CD4-positive, alpha-beta T cell (primary cell): ENCODE measurements at regions of chr2 and their contacts with region 1.

Region 1: GRCh38 chr2:181891258-181891965 is at the start of gene ITPRID2:
- DNase-seq: peak; percentile 12 to 86 (median 52)
- ATAC-seq: peak; percentile 90
- H3K4me3 ChIP-seq: peak within 1 kb of the TSS; percentile 75
- H3K4me3 Mint-ChIP-seq: peak within 1 kb of the TSS; percentile 97
- H3K27ac ChIP-seq: peak within 1 kb of the TSS in 1 of 2 donors; percentile 36
- H3K27ac Mint-ChIP-seq: peak within 1 kb of the TSS; percentile 77
- H3K4me1 ChIP-seq: peaks cover 8% of the 10 kb centered on the region
- H3K4me1 Mint-ChIP-seq: peaks cover 37% of the 10 kb centered on the region
- H3K27me3 ChIP-seq: peaks cover 4 to 15% of the 10 kb centered on the region in 2 experiments
- H3K27me3 Mint-ChIP-seq: peaks cover 25% of the 10 kb centered on the region
- CTCF ChIP-seq: no peak
- total RNA-seq, gene ITPRID2: 75.8 to 79.7 TPM

Region 2: DNA sequence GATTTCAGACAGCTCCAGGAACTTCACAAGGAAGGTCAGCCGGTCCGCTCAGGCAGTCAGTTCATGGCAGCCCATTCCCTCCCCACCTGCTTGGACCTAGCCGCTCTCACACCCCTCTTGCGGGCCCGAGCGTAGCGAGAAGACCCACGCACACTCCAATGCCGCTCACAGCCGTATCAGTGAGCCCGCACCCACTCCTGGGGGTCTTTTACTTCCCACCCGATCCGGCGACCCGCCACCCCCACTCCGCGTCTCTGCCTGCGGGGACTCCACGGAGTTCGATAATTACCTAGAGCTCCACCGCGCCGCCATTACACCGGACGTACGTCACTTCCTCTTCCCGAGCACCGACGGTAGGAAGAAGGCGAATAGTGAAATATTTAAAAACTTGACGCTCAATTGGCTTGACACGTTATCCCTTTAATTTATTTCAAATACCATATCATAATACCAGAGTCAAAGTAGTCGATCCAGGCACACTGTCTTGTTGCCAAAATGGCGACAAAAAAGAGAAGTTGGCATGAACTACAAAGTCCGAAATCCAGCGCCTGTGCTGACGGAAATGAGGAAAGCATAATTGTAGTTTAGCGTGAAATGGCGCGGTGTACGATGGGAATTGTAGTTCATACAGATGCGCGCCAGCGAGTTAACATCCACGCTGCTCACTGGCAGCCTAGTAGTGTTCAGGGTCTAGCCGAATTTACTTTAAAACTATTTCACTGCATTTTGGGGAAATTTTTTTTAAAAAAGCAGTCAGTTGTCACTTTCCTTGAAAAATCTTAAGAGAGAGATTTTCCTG is 1884.4 kb before region 1 on chr2 and contains the start of gene CWC22:
- CTCF ChIA-PET with region 1: no interaction called
- POLR2A ChIA-PET with region 1: no interaction called
- intact Hi-C with region 1: loop called in 1 of 2 experiments (anchors 5 kb)
- DNase-seq: peak; percentile 72 to 95 (median 78)
- ATAC-seq: peak; percentile 95
- H3K4me3 ChIP-seq: peak within 1 kb of the TSS; percentile 89
- H3K4me3 Mint-ChIP-seq: peak within 1 kb of the TSS; percentile 96
- H3K27ac ChIP-seq: peak within 1 kb of the TSS; percentile 97 to 98
- H3K27ac Mint-ChIP-seq: peak within 1 kb of the TSS; percentile 99
- H3K4me1 ChIP-seq: peaks cover 15% of the 10 kb centered on the region
- H3K4me1 Mint-ChIP-seq: peaks cover 39% of the 10 kb centered on the region
- H3K27me3 ChIP-seq: no peaks in the 10 kb centered on the region
- H3K27me3 Mint-ChIP-seq: no peaks in the 10 kb centered on the region
- CTCF ChIP-seq: no peak
- total RNA-seq, gene CWC22: 11.8 to 12.0 TPM

Region 3: GRCh38 chr2:181780047-181780651 is 111.3 kb before region 1 on chr2:
- CTCF ChIA-PET with region 1: no interaction called
- POLR2A ChIA-PET with region 1: no interaction called
- intact Hi-C with region 1: no loop called
- DNase-seq: no peak
- ATAC-seq: no peak
- H3K4me3 ChIP-seq: no peak overlapping the region
- H3K4me3 Mint-ChIP-seq: no peak overlapping the region
- H3K27ac ChIP-seq: no peak overlapping the region
- H3K27ac Mint-ChIP-seq: no peak overlapping the region
- H3K4me1 ChIP-seq: no peaks in the 10 kb centered on the region
- H3K4me1 Mint-ChIP-seq: no peaks in the 10 kb centered on the region
- H3K27me3 ChIP-seq: no peaks in the 10 kb centered on the region
- H3K27me3 Mint-ChIP-seq: no peaks in the 10 kb centered on the region
- CTCF ChIP-seq: no peak